Activated CD8-positive, alpha-beta T cell treated with anti-CD3 and anti-CD28 coated beads, Interleukin-2, amount 10 ng/mL, durations not matched to agents 7 days and 5 days (primary cell): ENCODE measurements at regions of chr17 and their contacts with region 1.

Region 1: DNA sequence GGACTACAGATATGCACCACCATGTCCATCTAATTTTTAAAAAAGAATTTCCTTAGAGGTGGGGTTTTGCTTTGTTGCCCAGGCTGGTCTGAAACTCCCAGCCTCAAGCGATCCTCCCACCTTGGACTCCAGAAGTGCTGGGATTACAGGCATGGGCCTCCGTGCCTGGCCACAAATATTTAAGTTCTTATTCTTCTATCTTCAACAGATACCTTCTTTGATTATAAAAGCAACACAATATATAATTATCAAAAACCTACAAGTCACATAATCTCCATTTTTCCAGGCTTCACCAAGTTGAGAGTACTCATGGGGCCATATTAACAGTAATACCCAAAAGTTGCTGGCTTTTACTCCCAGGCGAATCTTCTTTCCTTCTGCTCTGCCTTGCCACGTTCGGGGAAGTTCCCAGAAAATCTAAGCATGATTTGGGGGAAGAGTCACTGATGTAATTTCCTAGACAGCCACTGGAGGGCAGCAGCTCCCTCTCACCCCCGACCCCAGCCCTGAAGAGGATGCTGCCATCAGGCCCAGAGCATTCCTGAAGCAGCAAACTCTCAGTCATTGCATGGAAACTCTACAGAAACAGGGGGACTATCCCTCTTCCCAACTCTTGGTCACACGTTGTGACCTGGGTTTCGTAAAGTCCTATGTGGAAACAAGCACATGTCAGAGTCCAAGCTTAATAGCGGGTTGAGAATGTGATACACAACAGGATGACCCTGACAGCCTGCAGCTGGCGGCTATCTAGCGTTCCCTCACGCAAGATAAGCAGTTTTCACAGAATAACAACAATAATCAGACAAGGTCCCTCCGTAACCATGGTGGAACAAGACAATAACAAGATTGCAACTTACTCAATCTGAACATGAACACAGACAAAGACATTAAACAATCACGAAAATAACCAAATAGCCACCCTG is 43.9 kb upstream of the DHX40 start:
- DNase-seq: peak; percentile 69
- ATAC-seq: peak; percentile 76
- H3K4me3 Mint-ChIP-seq: no peak overlapping the region
- H3K27ac Mint-ChIP-seq: no peak overlapping the region
- H3K4me1 Mint-ChIP-seq: peaks cover 7% of the 10 kb centered on the region
- H3K27me3 Mint-ChIP-seq: peaks cover 24% of the 10 kb centered on the region

Region 2: DNA sequence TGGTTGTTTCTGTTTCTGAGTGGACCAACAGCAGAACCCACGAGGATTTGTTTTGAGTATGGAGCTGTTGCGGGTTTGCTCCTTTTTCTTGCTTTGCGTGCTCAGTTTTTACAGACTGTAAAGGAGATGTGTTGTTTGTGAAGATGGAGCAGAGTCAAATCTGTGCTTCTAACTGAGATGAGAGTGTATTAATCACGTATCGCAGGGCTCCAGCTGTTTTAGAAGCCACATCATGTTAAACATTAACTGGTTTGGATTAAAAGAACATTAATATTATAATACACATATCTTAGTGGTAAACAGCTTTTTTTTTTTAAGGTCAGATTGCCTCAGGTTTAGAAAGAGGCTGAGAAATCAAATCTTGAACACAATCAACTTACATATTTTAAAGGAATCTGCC is 120.6 kb before region 1 on chr17:
- CTCF ChIA-PET with region 1: no interaction called
- POLR2A ChIA-PET with region 1: no interaction called
- DNase-seq: no peak
- ATAC-seq: no peak
- H3K4me3 Mint-ChIP-seq: no peak overlapping the region
- H3K27ac Mint-ChIP-seq: no peak overlapping the region
- H3K4me1 Mint-ChIP-seq: peaks cover 5% of the 10 kb centered on the region
- H3K27me3 Mint-ChIP-seq: no peaks in the 10 kb centered on the region

Region 3: GRCh38 chr17:59533717-59534116 is 12.3 kb after region 1 on chr17:
- CTCF ChIA-PET with region 1: interaction called, 19 read pairs
- POLR2A ChIA-PET with region 1: no interaction called
- DNase-seq: peak; percentile 1
- ATAC-seq: no peak
- H3K4me3 Mint-ChIP-seq: no peak overlapping the region
- H3K27ac Mint-ChIP-seq: no peak overlapping the region
- H3K4me1 Mint-ChIP-seq: no peaks in the 10 kb centered on the region
- H3K27me3 Mint-ChIP-seq: peaks cover 27% of the 10 kb centered on the region

Region 4: DNA sequence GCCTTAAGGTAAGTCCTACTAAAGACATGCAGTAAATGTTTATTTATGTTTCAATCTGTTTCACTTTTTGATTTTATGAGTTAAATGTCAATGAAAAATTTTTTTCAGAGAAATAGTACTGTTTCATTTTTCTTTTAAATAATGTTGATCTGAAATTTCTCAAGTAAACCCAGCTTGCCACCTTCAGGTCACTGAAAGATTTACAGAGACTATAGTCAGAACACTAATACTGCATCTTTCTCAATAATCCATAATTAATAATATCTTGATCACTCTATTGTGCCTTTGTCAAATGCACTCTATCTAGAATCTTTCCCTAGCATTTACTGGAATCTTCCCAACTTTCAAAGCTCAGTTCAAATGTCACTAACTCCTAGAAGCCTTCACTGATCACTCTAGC is 37.5 kb after region 1 on chr17:
- CTCF ChIA-PET with region 1: interaction called, 13 read pairs
- POLR2A ChIA-PET with region 1: no interaction called
- DNase-seq: no peak
- ATAC-seq: no peak
- H3K4me3 Mint-ChIP-seq: no peak overlapping the region
- H3K27ac Mint-ChIP-seq: no peak overlapping the region
- H3K4me1 Mint-ChIP-seq: no peaks in the 10 kb centered on the region
- H3K27me3 Mint-ChIP-seq: peaks cover 8% of the 10 kb centered on the region